ENCODE measurements at regions of chr10 and their contacts with region 1.

Region 1: GRCh38 chr10:29857843-29858701 is 201.3 kb downstream of the JCAD start:
- DNase-seq: peak; percentile 81
- H3K4me3 Mint-ChIP-seq: peak overlapping the region; percentile 29
- H3K27ac Mint-ChIP-seq: peak overlapping the region; percentile 20
- H3K4me1 Mint-ChIP-seq: peaks cover 56% of the 10 kb centered on the region
- H3K27me3 Mint-ChIP-seq: no peaks in the 10 kb centered on the region
- CTCF ChIP-seq: peak; percentile 86

Region 2: DNA sequence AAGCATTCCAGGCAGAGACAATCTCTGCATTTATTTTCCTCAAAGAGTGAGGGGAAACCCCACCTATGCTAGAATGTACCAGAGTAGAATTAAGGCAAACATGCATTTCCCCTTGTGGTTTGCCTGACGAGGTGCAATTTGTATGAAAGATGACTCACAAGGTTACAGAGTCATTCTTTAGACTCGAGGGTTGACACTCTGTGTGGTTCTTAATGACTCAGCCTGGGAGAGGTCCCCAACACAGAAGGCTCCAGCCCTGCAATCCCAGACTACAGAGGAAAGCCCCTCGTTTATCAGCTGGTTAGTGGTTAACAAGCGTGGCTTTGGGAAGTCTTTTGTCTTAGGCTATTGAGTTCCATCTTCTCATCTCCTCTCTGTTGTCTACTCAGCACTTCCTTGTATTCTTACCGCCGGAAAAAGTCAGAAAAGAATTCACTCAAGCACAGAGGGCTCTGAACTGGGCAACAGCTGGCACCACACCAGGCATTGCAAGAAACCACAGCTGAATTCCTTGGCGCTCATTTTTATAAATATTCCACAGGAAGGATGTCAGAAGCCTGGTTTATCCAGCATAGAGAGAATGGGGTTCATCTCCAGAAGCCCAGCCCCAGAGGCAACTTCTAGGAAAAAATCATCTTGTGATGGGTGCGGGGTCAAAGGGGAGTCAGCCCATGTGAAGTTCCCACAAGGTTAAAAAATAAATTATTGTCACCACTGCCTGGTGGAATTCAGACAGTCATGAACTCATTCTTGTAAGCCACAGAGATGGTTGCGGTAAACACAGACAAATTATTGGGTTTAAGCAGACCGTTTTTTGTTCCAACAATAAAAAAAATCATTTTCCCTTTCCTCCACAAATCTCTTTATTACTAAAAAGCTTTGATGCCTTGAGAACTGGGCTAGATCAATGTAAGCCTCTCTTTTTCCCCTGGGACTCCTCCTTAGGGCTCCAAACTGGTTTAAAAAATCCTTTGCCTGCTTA is 198.8 kb before region 1 on chr10:
- CTCF ChIA-PET with region 1: no interaction called
- intact Hi-C with region 1: loop called (anchors 2 kb)
- DNase-seq: peak; percentile 84
- H3K4me3 Mint-ChIP-seq: peak overlapping the region; percentile 7
- H3K27ac Mint-ChIP-seq: peak overlapping the region; percentile 90
- H3K4me1 Mint-ChIP-seq: peaks cover 53% of the 10 kb centered on the region
- H3K27me3 Mint-ChIP-seq: no peaks in the 10 kb centered on the region
- CTCF ChIP-seq: no peak

Region 3: GRCh38 chr10:29757551-29758297 is 100.3 kb before region 1 on chr10:
- CTCF ChIA-PET with region 1: interaction called, 3 read pairs
- intact Hi-C with region 1: loop called (anchors 5 kb)
- DNase-seq: peak; percentile 77
- H3K4me3 Mint-ChIP-seq: peak overlapping the region; percentile 49
- H3K27ac Mint-ChIP-seq: peak overlapping the region; percentile 91
- H3K4me1 Mint-ChIP-seq: peaks cover 43% of the 10 kb centered on the region
- H3K27me3 Mint-ChIP-seq: no peaks in the 10 kb centered on the region
- CTCF ChIP-seq: no peak

Region 4: DNA sequence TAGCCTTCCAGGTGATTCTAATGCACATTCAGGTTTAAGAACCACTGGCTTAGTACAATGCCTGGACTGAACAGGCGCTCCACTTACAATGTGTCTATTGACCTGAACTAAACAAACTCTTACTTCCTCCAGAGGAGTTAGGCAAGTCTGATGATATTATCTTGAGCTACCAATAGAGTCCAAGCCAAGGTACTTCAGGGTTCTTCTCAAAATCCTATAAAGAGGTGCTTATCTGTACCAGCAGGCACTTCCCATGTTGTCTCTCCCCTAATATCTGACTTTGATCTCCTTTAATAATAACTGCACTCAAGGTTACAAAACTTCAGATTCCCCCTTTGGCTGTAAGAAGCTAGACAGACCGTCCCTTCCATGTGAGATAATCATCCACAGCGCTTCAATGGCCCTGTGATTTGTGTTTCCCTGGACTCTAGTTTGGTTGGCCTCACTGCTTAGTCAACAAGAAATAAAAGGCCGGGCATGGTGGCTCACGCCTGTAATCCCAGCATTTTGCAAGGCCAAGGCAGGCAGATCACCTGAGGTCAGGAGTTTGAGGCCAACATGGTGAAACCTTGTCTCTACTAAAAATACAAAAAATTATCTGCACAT is 66.2 kb before region 1 on chr10:
- CTCF ChIA-PET with region 1: no interaction called
- intact Hi-C with region 1: no loop called
- DNase-seq: no peak
- H3K4me3 Mint-ChIP-seq: no peak overlapping the region
- H3K27ac Mint-ChIP-seq: no peak overlapping the region
- H3K4me1 Mint-ChIP-seq: peaks cover 16% of the 10 kb centered on the region
- H3K27me3 Mint-ChIP-seq: no peaks in the 10 kb centered on the region
- CTCF ChIP-seq: no peak

Region 5: GRCh38 chr10:29804025-29804852 is 53.8 kb before region 1 on chr10:
- CTCF ChIA-PET with region 1: no interaction called
- intact Hi-C with region 1: loop called (anchors 5 kb)
- DNase-seq: peak; percentile 87
- H3K4me3 Mint-ChIP-seq: peak overlapping the region; percentile 33
- H3K27ac Mint-ChIP-seq: peak overlapping the region; percentile 90
- H3K4me1 Mint-ChIP-seq: peaks cover 54% of the 10 kb centered on the region
- H3K27me3 Mint-ChIP-seq: no peaks in the 10 kb centered on the region
- CTCF ChIP-seq: no peak

Region 6: DNA sequence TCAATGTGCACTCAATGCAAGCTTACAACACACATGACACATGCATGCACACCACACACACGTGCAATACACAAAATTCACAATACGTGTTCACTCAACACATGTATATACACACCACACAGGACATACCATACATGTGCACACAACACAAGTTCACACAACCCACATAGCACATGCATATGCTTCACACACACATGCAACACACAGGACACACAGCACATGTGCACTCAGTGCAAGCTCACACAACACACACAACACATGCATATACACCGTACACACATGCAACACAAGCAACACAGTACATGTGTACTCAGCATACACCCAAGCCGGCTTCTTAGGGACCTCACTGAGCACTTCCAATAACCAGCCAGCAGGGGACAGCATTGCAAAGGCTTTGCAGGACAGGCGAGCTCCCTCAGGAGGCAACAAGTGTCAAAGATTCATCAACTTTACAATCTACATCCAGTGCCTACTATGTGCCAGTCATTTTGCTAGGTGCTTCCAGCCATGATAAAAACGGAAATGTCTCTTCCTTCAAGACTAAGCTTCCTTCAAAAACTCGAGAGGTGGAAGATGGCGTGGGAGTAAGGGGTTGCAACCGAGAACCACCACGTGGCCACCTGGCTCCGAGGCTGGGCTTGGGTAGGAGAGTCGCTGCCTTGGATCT is 140.2 kb after region 1 on chr10:
- CTCF ChIA-PET with region 1: interaction called, 4 read pairs
- intact Hi-C with region 1: loop called (anchors 2 kb)
- DNase-seq: peak; percentile 84
- H3K4me3 Mint-ChIP-seq: no peak overlapping the region
- H3K27ac Mint-ChIP-seq: no peak overlapping the region
- H3K4me1 Mint-ChIP-seq: peaks cover 55% of the 10 kb centered on the region
- H3K27me3 Mint-ChIP-seq: no peaks in the 10 kb centered on the region
- CTCF ChIP-seq: peak; percentile 93

Measured in Calu3 (cell line).